PC-3 (cell line): ENCODE measurements at regions of chr19 and their contacts with region 1.

Region 1: DNA sequence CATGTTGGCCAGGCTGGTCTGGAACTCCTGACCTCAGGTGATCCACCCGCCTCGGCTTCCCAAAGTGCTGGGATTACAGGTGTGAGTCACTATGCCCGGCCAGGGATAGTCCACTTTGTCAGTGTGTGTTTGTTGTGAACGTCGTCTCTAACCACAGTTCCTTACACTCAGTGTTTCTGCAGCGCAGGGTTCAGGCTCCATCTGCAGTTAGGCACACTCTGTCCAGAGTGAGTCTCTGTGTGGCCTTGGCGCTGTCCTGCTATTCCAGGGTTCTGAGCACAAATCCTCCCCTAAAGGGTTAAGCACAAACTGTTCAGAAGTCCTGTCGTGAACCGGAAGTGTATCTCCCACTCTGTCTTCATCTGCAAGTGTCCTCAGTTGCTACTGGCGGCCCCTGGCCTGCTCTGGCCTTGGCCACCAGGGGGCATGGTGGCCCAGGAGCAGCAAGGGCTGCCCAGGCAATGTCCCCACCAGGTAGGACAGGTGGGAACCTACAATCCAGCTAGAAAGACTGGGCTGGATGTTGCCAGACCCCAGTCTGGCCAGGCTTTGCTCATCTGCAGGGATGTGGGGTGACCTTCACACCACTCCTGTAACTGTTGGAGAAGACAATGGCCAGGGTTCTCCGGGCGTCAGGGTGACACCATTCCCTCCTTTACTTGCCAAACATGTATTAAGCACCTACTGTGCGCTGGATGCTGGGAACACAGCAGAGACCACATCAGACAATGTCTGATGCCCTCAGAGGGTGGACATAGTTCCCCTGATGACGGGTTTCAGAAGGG is 38.7 kb upstream of the GATAD2A start:
- DNase-seq: peak; percentile 91
- ATAC-seq: peak; percentile 73
- H3K4me3 ChIP-seq: no peak overlapping the region
- H3K27ac ChIP-seq: 0 out of 2 replicates have a peak overlapping the region, but pooled peaks have one; percentile 12
- H3K4me1 ChIP-seq: peaks cover 18% of the 10 kb centered on the region
- H3K27me3 ChIP-seq: no peaks in the 10 kb centered on the region
- CTCF ChIP-seq: peak; percentile 96

Region 2: GRCh38 chr19:19385108-19385899 is 18.5 kb after region 1 on chr19:
- CTCF ChIA-PET with region 1: no interaction called
- POLR2A ChIA-PET with region 1: no interaction called
- intact Hi-C with region 1: loop called (anchors 1 kb)
- DNase-seq: peak; percentile 99
- ATAC-seq: peak; percentile 96
- H3K4me3 ChIP-seq: peak overlapping the region; percentile 100
- H3K27ac ChIP-seq: peak overlapping the region; percentile 14; the same call in 1 of the 2 replicates
- H3K4me1 ChIP-seq: peaks cover 29% of the 10 kb centered on the region
- H3K27me3 ChIP-seq: no peaks in the 10 kb centered on the region
- CTCF ChIP-seq: no peak